ENCODE measurements at regions of chr12 and their contacts with region 1.

Region 1: GRCh38 chr12:93742110-93742934 is 65.1 kb downstream of the CRADD start:
- DNase-seq: peak; percentile 60 to 73
- ATAC-seq: peak; percentile 95 to 96 (median 95)
- H3K4me3 ChIP-seq: peak overlapping the region; percentile 88
- H3K4me3 Mint-ChIP-seq: peak overlapping the region; percentile 98
- H3K27ac ChIP-seq: peak overlapping the region; percentile 77
- H3K27ac Mint-ChIP-seq: peak overlapping the region; percentile 93 to 96
- H3K4me1 ChIP-seq: peaks cover 7% of the 10 kb centered on the region
- H3K4me1 Mint-ChIP-seq: peaks cover 22 to 38% of the 10 kb centered on the region in 2 donors
- H3K27me3 ChIP-seq: no peaks in the 10 kb centered on the region
- H3K27me3 Mint-ChIP-seq: no peaks in the 10 kb centered on the region
- CTCF ChIP-seq: peak; percentile 30

Region 2: DNA sequence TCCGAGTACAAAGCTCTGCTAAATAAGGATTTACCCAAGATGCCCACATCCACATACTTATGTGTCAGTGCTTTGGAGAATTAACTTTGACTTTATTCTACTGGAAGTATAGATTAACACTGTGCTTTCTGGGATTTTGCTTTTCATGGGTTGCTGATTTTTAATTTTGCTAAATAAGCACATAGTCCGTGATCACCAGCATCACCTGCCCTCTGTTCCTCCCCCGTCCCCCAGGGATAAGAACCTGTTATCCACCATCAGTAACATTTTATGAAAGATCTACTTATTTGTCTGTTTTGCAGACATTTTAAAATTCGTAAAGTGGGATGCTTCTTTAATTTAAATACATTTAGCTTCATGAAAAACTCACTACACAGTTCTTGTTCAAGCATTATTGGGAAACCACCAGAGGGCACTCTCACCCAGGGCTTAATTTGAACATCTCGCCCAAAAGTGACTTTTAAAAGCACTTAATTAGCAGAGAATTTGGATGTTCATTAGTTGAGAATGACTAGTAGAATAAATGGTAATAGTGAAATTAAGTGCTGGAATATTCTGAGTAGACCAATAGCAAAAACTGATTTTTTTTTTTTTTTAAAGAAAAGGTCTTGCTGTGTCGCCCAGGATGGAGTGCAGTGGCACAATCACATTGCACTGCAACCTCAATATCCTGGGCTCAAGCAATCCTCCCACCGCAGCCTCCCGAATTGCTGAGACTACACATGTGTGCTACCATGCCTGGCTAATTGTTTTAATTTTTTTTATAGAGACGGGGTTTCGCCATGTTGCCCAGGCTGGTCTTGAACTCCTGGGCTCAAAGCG is 239.3 kb before region 1 on chr12:
- intact Hi-C with region 1: loop called (anchors 2 kb)
- DNase-seq: peak; percentile 43 to 80
- ATAC-seq: peak; percentile 53 to 66 (median 54)
- H3K4me3 ChIP-seq: no peak overlapping the region
- H3K4me3 Mint-ChIP-seq: no peak overlapping the region
- H3K27ac ChIP-seq: no peak overlapping the region
- H3K27ac Mint-ChIP-seq: no peak overlapping the region
- H3K4me1 ChIP-seq: no peaks in the 10 kb centered on the region
- H3K4me1 Mint-ChIP-seq: peaks cover 5% of the 10 kb centered on the region in 2 donors
- H3K27me3 ChIP-seq: no peaks in the 10 kb centered on the region
- H3K27me3 Mint-ChIP-seq: no peaks in the 10 kb centered on the region
- CTCF ChIP-seq: peak; percentile 88

Region 3: DNA sequence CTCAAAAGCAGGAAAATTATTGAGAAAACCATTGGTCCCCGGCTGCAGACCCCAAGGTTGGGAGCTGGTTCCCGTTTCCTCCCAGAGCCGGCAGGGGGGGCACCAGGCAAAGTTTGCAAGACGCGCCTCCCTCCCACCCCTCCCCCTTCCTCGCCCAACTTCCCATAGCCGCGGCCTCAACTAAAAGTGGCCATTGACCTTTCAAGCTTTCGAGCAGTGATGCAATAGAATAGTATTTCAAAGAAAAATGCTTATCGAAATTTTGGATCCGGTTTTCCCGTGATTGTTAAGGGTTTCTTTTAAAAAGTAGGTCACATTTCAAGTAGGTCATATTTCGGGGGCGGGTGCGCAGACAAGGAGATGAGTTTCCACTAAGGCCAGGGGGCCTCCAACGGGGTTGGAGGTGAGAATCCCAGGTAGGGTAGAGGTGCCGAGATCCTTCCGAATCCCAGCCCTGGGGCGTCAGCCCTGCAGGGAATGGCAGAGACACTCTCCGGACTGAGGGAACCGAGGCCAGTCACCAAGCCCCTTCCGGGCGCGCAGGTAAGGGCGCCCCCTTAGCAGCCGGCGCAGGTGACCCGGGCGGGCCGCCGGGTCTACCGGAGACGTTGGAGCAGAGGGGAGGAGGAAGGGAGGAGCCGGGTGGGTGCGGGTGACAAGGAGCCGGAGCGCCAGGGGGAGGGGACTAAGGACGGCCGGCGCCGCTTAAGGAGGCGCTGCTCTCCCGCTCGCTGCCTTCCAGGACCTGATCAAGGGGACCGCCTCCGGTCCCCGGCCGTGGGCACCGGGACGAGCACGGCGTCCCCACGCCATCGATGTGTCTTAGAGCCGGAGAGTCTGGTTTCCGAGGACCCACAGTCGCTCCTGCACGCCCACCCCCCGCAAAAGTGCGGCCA is 172.4 kb before region 1 on chr12:
- intact Hi-C with region 1: loop called (anchors 1 kb)
- DNase-seq: peak; percentile 66 to 85
- ATAC-seq: peak; percentile 40 to 63 (median 46)
- H3K4me3 ChIP-seq: peak overlapping the region; percentile 95
- H3K4me3 Mint-ChIP-seq: peak overlapping the region; percentile 95
- H3K27ac ChIP-seq: peak overlapping the region; percentile 80
- H3K27ac Mint-ChIP-seq: peak overlapping the region; percentile 86 to 89
- H3K4me1 ChIP-seq: peaks cover 26% of the 10 kb centered on the region
- H3K4me1 Mint-ChIP-seq: peaks cover 31 to 38% of the 10 kb centered on the region in 2 donors
- H3K27me3 ChIP-seq: peaks cover 5% of the 10 kb centered on the region
- H3K27me3 Mint-ChIP-seq: peaks cover 0 to 4% of the 10 kb centered on the region in 2 donors
- CTCF ChIP-seq: peak; percentile 72

Region 4: GRCh38 chr12:93868771-93869170 is 126.4 kb after region 1 on chr12:
- intact Hi-C with region 1: no loop called
- DNase-seq: no peak
- ATAC-seq: no peak
- H3K4me3 ChIP-seq: no peak overlapping the region
- H3K4me3 Mint-ChIP-seq: no peak overlapping the region
- H3K27ac ChIP-seq: no peak overlapping the region
- H3K27ac Mint-ChIP-seq: no peak overlapping the region
- H3K4me1 ChIP-seq: no peaks in the 10 kb centered on the region
- H3K4me1 Mint-ChIP-seq: no peaks in the 10 kb centered on the region
- H3K27me3 ChIP-seq: no peaks in the 10 kb centered on the region
- H3K27me3 Mint-ChIP-seq: no peaks in the 10 kb centered on the region
- CTCF ChIP-seq: no peak

Measured in natural killer cell (primary cell).